ENCODE measurements at regions of chr12 and their contacts with region 1.

Region 1: DNA sequence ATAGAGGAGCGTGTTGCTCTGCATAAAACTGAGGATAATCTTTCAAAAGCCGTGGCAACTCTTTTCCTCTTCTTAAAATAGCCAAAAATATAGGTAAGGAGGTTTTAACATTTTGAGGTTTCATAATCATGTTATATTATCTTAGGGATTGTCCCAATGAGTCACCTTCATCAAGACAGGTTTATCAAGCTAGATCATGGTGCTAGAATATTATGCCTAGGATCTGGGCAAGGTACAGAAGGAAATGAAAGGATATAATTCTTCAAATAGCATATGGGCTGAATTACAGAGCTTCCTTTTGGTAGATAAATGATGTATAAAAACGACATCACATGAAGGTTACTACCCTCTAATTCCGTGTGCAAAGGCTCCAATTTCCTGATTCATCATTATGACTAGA is 28.7 kb upstream of the TBC1D15 start:
- DNase-seq: no peak
- H3K4me3 ChIP-seq: no peak overlapping the region
- H3K27ac ChIP-seq: no peak overlapping the region
- H3K4me1 ChIP-seq: no peaks in the 10 kb centered on the region
- H3K27me3 ChIP-seq: no peaks in the 10 kb centered on the region
- CTCF ChIP-seq: no peak

Region 2: GRCh38 chr12:71828810-71829209 is 17.9 kb after region 1 on chr12:
- intact Hi-C with region 1: loop called (anchors 2 kb)
- DNase-seq: no peak
- H3K4me3 ChIP-seq: no peak overlapping the region
- H3K27ac ChIP-seq: no peak overlapping the region
- H3K4me1 ChIP-seq: no peaks in the 10 kb centered on the region
- H3K27me3 ChIP-seq: no peaks in the 10 kb centered on the region
- CTCF ChIP-seq: no peak

Measured in colonic mucosa (tissue), 4 donors.